HEK293 (cell line): ENCODE measurements at regions of chr1 and their contacts with region 1.

Region 1: GRCh38 chr1:110766025-110766647 is 91.4 kb upstream of the KCNA3 start:
- H3K4me3 ChIP-seq: no peak overlapping the region
- H3K27ac ChIP-seq: no peak overlapping the region
- H3K4me1 ChIP-seq: no peaks in the 10 kb centered on the region
- CTCF ChIP-seq: peak; percentile 77; the same call in 1 of the 2 replicates

Region 2: DNA sequence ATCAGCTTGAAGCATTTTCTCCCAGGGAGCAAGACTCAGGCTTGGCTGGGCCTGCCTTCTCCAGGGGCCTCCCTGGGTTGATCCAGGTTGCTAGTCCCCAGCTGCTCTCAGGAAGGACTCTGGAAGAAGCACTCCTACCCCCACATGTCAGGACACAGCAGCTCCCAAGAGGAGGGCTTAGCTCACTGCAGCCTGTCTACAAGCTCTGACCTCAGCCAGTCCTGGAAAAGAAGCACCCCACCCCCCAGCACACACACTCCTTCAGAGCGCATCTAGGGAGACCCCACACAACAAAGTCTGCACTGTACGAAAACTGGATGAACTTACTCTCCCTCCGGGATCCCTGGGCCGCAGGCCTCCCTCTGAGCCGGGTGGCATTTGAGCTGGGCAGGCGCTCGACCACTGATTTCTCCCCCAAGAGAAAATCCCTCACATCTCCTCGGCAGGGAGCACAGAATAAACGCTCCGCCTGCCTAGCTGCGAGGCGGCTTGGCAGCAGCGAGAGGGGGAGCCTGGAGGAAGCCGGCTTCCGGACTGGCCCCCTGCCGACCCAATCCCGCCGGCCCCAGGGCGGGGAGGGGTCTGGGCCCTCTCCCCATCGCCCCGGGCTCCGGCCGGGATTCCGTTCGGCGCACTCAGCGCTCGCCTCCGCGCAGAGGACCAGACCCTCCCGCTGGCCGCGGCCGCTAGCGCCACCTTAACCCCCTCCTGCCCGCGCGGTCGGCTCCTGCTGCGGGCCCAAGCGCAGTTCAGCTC is 160.1 kb before region 1 on chr1 and contains the start of gene KCNA2:
- CTCF ChIA-PET with region 1: interaction called, 11 read pairs
- POLR2A ChIA-PET with region 1: no interaction called
- H3K4me3 ChIP-seq: peak within 1 kb of the TSS; percentile 43
- H3K27ac ChIP-seq: no peak within 1 kb of the TSS; the same call in 1 of the 2 replicates
- H3K4me1 ChIP-seq: no peaks in the 10 kb centered on the region
- CTCF ChIP-seq: peak; percentile 57

Region 3: DNA sequence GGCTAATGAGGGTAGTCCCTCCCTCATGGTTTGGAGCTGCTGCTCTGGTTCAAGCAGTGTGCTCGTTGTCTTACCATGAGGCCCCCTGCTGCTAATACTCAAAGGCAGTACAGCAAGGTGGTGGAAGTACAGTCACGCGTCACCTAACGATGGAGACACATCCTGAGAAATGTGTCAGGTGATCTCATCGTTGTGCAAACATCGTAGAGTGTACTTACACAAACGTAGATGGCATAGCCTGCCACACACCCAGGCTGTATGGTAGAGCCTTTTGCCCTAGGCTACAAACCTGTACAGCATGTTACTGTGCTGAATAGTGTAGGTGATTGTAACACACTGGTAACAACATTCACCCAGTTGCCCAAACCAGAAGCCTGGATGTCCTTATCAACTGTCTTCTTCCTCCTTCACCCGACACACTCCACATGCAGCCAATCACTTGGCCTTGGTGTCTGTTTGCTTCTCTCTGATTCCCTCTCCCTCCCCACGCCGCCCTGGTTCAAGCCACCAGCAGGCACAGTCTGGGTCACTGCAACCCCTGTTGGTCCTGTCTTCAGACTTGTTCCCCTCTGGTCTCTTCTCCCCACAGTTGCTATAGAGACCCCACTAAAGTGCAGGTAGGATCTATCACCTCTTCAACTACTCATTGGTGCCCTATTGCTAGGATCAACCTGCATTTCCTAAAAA is 153.9 kb before region 1 on chr1:
- CTCF ChIA-PET with region 1: interaction called, 95 read pairs
- POLR2A ChIA-PET with region 1: no interaction called
- H3K4me3 ChIP-seq: no peak overlapping the region
- H3K27ac ChIP-seq: no peak overlapping the region
- H3K4me1 ChIP-seq: no peaks in the 10 kb centered on the region
- CTCF ChIP-seq: no peak

Region 4: DNA sequence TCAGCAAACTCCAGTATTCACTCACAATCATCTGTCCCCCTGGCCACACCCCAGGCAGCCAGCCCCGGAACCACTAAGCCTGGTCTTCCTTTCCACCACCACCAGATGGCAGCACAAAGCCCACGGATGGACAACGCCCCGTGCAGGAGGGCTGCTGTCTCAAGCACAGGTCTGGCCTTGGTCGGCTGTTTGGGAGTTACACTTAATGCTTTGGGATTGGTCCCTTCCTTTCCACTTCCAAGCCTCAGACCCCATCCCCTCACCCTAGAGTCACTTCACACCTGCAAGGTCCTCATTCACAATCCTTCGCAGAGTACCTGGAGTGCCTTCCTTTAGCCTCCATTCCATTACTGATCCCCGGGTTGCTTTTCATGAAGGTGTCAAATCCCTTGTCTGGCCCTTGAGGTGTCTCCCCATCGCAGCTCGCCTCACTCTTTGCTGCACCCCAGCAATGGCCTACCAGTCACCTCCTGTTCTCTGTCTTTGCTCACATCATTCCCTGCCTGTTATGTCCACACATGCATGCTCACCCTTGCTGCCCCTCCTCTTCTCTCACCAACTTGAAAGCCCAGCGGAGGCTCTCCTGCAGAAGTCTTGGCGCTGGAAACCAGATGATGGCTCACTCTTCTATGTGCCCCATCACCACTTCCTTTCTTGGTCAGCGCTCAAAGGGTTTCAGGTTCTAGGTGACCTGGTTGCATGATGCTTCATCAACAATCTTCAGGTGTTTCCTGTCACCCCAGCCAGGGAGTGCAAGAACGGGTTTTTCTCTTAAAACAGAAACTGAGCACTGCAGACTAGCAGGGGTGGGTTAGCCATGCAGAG is 135.1 kb before region 1 on chr1:
- CTCF ChIA-PET with region 1: interaction called, 56 read pairs
- POLR2A ChIA-PET with region 1: no interaction called
- H3K4me3 ChIP-seq: no peak overlapping the region
- H3K27ac ChIP-seq: no peak overlapping the region
- H3K4me1 ChIP-seq: no peaks in the 10 kb centered on the region
- CTCF ChIP-seq: peak; percentile 75

Region 5: GRCh38 chr1:110780600-110781484 is 14.7 kb after region 1 on chr1:
- CTCF ChIA-PET with region 1: interaction called, 65 read pairs
- POLR2A ChIA-PET with region 1: no interaction called
- H3K4me3 ChIP-seq: no peak overlapping the region
- H3K27ac ChIP-seq: no peak overlapping the region
- H3K4me1 ChIP-seq: no peaks in the 10 kb centered on the region
- CTCF ChIP-seq: peak; percentile 64; the same call in 1 of the 2 replicates

Region 6: DNA sequence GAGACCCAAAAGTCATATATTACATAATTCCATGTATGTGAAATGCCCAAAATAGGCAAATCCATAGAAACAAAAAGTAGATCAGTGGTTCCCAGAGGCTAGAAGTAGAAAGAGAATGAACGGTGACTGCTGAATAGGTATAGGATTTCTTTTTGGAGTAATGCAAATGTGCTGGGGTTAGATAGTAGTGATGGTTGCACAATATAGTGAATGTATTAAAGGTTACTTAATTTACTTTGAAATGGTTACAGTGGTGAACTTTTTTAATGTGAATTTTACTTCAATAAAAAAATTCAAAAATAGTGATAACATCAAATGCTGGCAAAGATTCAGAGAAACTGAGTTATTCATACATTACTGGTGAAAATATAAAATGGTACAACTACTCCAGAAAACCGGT is 74.6 kb after region 1 on chr1:
- CTCF ChIA-PET with region 1: no interaction called
- POLR2A ChIA-PET with region 1: no interaction called
- H3K4me3 ChIP-seq: no peak overlapping the region
- H3K27ac ChIP-seq: no peak overlapping the region
- H3K4me1 ChIP-seq: no peaks in the 10 kb centered on the region
- CTCF ChIP-seq: no peak